ENCODE measurements at regions of chr9 and their contacts with region 1.

Region 1: DNA sequence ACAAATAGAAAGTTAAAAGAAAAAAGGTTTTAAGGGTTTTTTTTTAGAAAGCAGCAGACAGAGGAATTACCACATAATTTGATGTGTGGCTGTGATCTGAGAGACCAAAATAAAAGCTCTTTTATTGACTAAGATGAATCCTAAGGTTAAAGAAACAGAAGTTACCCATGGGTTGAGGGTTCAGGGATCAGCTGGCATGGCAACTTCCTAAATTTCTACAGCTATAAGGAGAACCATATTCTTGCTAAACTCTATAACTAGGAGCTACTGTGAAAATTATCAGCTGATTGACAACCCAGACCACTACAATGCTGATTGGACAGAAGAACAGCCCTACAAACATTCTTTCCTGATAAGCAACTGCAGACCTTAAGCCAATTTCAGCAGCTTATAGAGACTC is 40.2 kb downstream of the TMEM215 start:
- DNase-seq: no peak
- ATAC-seq: no peak
- H3K4me3 ChIP-seq: no peak overlapping the region
- H3K27ac ChIP-seq: no peak overlapping the region
- H3K4me1 ChIP-seq: no peaks in the 10 kb centered on the region
- H3K27me3 ChIP-seq: no peaks in the 10 kb centered on the region
- CTCF ChIP-seq: no peak
- POLR2A ChIP-seq: no peak

Region 2: DNA sequence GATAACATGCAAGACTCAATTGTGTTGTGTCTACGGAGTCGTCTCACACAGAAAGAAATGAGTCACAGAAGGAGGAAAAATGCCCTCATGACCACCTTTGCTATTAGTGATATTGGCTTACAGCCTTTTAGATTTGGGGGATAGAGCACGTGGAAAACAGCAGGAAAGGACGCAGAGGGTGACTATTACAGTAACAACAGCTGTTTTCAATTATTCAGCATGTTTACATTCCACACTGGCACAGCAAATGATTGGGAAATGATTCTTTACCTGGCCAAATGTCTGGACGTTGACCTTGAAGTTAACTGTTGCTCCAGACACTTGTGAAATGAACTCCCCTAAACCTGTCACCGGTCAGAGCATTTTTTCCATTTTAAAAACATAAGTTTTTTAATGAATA is 131.1 kb after region 1 on chr9:
- intact Hi-C with region 1: loop called in 1 of 10 experiments (anchors 5 kb)
- DNase-seq: no peak
- ATAC-seq: no peak
- H3K4me3 ChIP-seq: no peak overlapping the region
- H3K27ac ChIP-seq: no peak overlapping the region
- H3K4me1 ChIP-seq: peaks cover 0 to 8% (median 0%) of the 10 kb centered on the region in 12 donors
- H3K27me3 ChIP-seq: peaks cover 0 to 10% (median 0%) of the 10 kb centered on the region in 9 donors
- CTCF ChIP-seq: no peak
- POLR2A ChIP-seq: no peak